ENCODE measurements at regions of chr1 and their contacts with region 1.

Region 1: GRCh38 chr1:151346769-151347522 is at the start of gene RFX5:
- DNase-seq: peak; percentile 98
- H3K4me3 ChIP-seq: peak within 1 kb of the TSS; percentile 58 to 73
- H3K27ac ChIP-seq: peak within 1 kb of the TSS; percentile 81 to 90
- H3K4me1 ChIP-seq: peaks cover 15% of the 10 kb centered on the region
- H3K27me3 ChIP-seq: no peaks in the 10 kb centered on the region
- CTCF ChIP-seq: no peak
- POLR2A ChIP-seq: no peak
- total RNA-seq, gene RFX5: 18.8 to 19.8 TPM

Region 2: GRCh38 chr1:151189638-151190445 is 157.1 kb before region 1 on chr1 and contains the start of gene VPS72:
- intact Hi-C with region 1: loop called (anchors 5 kb)
- DNase-seq: peak; percentile 95
- H3K4me3 ChIP-seq: peak within 1 kb of the TSS; percentile 81 to 91
- H3K27ac ChIP-seq: peak within 1 kb of the TSS; percentile 75 to 84
- H3K4me1 ChIP-seq: peaks cover 17% of the 10 kb centered on the region
- H3K27me3 ChIP-seq: no peaks in the 10 kb centered on the region
- CTCF ChIP-seq: peak; percentile 14 to 51 (median 33)
- POLR2A ChIP-seq: no peak
- total RNA-seq, gene VPS72: 31.9 to 42.7 TPM